Activated T-helper 1 cell treated with anti-CD3 and anti-CD28 coated beads, Interleukin-12 subunit alpha, Interleukin-12 subunit beta, Interleukin-2, Interleukin-4 antibody, amounts not matched to agents 30 ng/mL and 10 ng/mL and 1 ng/mL, durations not matched to agents 14 hours and 24 hours and 36 hours (primary cell): ENCODE measurements at regions of chr11 and their contacts with region 1.

Region 1: GRCh38 chr11:60615497-60615896 is 83.9 kb upstream of the MS4A8 start:
- DNase-seq: no peak
- H3K4me3 Mint-ChIP-seq: no peak overlapping the region
- H3K27ac Mint-ChIP-seq: no peak overlapping the region
- H3K4me1 Mint-ChIP-seq: no peaks in the 10 kb centered on the region
- H3K27me3 Mint-ChIP-seq: peaks cover 2% of the 10 kb centered on the region

Region 2: GRCh38 chr11:60265373-60266214 is 349.9 kb before region 1 on chr11:
- intact Hi-C with region 1: loop called (anchors 10 kb)
- DNase-seq: no peak
- H3K4me3 Mint-ChIP-seq: no peak overlapping the region
- H3K27ac Mint-ChIP-seq: no peak overlapping the region
- H3K4me1 Mint-ChIP-seq: no peaks in the 10 kb centered on the region
- H3K27me3 Mint-ChIP-seq: no peaks in the 10 kb centered on the region

Region 3: DNA sequence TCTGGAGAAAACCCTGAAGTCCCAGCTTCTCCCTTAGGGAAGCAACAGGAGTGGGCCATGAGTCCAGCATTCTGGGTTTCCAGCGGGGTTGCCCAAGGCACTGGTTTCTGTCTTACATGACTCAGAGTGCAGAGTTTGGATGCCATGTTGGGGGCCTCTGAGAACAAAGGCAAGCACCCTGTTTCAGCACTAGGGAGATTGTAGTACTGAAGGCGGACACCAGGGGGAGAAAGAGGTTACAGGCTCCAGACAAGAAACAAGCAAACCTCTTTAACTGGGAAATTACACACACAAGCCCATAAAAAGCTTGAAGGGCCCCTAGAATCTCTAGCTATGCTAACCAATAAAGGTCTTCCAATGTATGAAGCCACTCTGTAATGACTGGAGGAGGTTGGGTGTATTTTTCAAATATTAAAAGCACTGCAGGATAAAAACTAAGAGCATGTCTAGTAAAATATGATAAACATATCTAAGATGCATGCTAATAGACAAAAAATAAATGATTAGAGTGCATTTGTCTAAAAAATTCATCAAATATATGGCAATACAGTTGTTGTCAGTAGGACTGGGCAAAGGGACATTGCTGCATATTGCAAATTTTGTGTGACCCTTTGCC is 281.4 kb before region 1 on chr11:
- intact Hi-C with region 1: loop called (anchors 2 kb)
- DNase-seq: peak; percentile 33
- H3K4me3 Mint-ChIP-seq: no peak overlapping the region
- H3K27ac Mint-ChIP-seq: no peak overlapping the region
- H3K4me1 Mint-ChIP-seq: no peaks in the 10 kb centered on the region
- H3K27me3 Mint-ChIP-seq: peaks cover 2% of the 10 kb centered on the region

Region 4: DNA sequence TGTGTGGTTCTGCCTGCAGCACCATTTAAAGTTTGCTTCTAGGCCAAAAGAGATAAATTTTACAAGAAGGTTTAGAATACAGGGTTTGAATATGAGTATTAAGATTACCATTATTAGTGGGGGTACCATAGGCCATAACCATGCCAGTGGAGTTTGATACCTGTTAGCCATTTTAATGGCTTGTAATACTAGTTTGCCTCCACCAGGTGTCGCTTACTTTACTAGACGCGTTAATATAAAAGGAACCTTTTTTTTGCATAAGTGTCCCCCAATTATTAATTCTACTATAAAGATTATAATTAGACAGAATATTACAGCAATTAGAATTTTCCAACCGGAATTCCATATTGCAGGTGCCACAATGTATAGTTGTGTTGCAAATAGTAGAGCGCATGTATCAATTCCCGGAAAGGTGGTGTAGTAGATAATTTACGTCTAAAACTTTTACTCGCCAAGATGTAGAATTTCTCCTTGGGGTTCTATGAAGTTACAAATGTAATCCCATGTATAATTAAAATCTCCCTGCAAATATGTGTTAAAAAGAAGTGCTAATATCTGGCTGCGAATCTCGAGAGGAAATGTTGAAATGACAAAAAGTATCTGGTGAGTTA is 272.3 kb before region 1 on chr11:
- intact Hi-C with region 1: loop called (anchors 1 kb)
- DNase-seq: no peak
- H3K4me3 Mint-ChIP-seq: no peak overlapping the region
- H3K27ac Mint-ChIP-seq: no peak overlapping the region
- H3K4me1 Mint-ChIP-seq: no peaks in the 10 kb centered on the region
- H3K27me3 Mint-ChIP-seq: peaks cover 6% of the 10 kb centered on the region

Region 5: DNA sequence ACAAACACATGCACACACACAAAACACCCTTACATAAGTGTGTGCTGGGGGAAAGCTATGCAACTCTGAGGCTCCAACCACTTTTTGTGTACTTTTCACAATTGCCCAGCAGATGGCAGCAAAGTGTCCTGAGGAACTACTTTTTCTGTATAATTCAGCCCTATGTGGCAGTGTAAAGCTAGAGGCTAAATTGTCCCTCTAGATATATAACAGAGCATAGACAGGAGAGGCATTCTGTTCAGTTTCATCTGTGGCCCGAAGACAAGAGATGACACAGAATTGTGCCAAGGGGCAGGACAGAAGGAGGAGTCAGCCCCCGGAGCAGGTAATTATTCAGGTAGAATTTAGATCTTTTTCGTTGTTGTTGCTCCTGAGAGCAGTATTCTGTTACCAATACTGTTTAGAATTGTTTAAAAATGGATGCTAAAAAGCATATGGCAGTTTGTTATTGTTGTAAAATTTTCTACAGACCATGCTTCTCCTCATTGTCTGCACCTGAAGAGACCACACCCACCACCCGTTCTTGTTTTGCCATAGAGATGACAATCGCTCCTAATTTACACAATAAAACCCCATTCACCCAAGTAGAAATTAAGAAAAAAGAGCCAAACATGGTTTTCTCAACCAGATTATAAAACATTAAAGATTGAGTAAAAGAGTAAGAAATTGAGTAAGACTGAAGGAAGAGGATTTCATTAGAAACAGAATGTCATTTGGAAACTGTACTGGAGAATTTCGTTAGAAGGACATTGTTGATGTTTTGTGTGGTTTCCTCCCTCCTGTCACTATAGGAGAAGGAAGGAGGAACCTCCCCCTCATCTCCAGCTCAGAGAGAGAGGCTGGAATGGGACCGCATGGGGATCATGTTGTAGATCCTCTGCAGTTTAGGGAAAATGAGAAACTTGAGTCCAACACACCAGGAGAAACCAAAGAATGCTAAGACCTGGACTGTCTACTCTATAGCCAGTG is 251.7 kb before region 1 on chr11:
- intact Hi-C with region 1: loop called (anchors 1 kb)
- DNase-seq: peak; percentile 40
- H3K4me3 Mint-ChIP-seq: no peak overlapping the region
- H3K27ac Mint-ChIP-seq: no peak overlapping the region
- H3K4me1 Mint-ChIP-seq: no peaks in the 10 kb centered on the region
- H3K27me3 Mint-ChIP-seq: peaks cover 2% of the 10 kb centered on the region

Region 6: DNA sequence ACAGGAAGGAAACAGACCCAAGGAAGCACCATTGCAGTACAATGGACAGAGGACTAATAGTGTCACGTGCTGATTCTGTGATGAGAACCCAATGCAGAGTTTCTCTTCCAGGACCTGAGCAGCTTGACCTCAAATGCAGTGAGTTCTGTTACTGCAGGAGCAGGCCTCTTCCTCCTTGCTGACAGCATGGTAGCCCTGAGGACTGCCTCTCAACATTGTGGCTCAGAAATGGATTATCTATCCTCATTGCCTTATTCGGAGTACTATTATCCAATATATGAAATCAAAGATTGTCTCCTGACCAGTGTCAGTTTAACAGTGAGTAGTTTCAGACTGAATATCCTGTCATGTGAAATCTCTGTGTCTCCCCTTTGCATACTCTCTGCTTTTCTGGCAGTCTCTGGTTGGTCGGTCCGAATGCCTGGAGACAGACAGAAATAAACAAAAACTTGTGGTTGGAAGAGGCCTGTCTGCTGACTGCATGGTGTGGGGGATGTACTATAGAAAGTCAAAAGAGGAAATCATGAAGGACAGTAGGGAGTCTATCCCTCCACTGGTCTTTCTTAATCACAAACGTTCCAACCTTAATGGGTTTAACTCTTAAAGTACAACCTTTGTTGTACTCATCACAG is 226.1 kb before region 1 on chr11:
- intact Hi-C with region 1: no loop called
- DNase-seq: no peak
- H3K4me3 Mint-ChIP-seq: no peak overlapping the region
- H3K27ac Mint-ChIP-seq: no peak overlapping the region
- H3K4me1 Mint-ChIP-seq: no peaks in the 10 kb centered on the region
- H3K27me3 Mint-ChIP-seq: peaks cover 1% of the 10 kb centered on the region